Prostate gland (tissue), 2 donors: ENCODE measurements at regions of chr10 and their contacts with region 1.

Region 1: GRCh38 chr10:30591249-30591670 is 38.3 kb downstream of the LYZL2 start:
- DNase-seq: peak; percentile 24
- H3K4me3 ChIP-seq: no peak overlapping the region
- H3K27ac ChIP-seq: no peak overlapping the region
- H3K4me1 ChIP-seq: no peaks in the 10 kb centered on the region
- H3K27me3 ChIP-seq: no peaks in the 10 kb centered on the region
- CTCF ChIP-seq: peak; percentile 20 to 78 (median 75)
- POLR2A ChIP-seq: no peak

Region 2: DNA sequence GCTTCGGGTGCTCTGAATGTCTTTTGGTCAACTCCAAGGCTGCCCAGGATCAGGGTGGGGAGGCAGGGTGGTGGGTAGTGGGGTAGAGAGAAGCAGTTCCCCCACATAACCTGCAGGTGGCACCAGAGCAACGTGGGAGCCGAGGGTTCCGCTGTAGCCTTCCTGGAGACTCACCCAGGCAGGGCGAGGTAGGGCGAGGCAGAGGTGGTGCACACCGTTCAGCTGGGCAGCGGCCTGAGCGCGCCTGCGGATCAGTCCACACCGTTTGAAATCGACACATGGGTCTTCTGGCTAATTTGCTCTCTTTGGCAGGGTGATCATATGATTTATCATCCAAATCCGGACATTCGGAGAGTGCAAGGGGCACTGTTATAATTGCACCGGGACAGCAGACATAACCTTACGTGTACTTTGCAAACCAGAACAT is 198.7 kb before region 1 on chr10:
- intact Hi-C with region 1: loop called (anchors 2 kb)
- DNase-seq: peak; percentile 55
- H3K4me3 ChIP-seq: no peak overlapping the region
- H3K27ac ChIP-seq: no peak overlapping the region
- H3K4me1 ChIP-seq: no peaks in the 10 kb centered on the region
- H3K27me3 ChIP-seq: no peaks in the 10 kb centered on the region
- CTCF ChIP-seq: peak; percentile 63 to 82 (median 80)
- POLR2A ChIP-seq: no peak

Region 3: GRCh38 chr10:30413996-30414576 is 177.2 kb before region 1 on chr10:
- intact Hi-C with region 1: loop called (anchors 5 kb)
- DNase-seq: peak; percentile 56
- H3K4me3 ChIP-seq: no peak overlapping the region
- H3K27ac ChIP-seq: no peak overlapping the region
- H3K4me1 ChIP-seq: no peaks in the 10 kb centered on the region
- H3K27me3 ChIP-seq: no peaks in the 10 kb centered on the region
- CTCF ChIP-seq: peak; percentile 46 to 88 (median 75)
- POLR2A ChIP-seq: no peak